H1 (cell line): ENCODE measurements at regions of chr15 and their contacts with region 1.

Region 1: GRCh38 chr15:36877796-36878683 is 222.3 kb downstream of the MEIS2 start:
- DNase-seq: no peak
- H3K4me3 ChIP-seq: peak overlapping the region; percentile 34 to 62 (median 58); a peak in 7 of 8 replicates
- H3K27ac ChIP-seq: no peak overlapping the region
- H3K4me1 ChIP-seq: peaks cover 8 to 37% (median 23%) of the 10 kb centered on the region in 4 experiments
- H3K27me3 ChIP-seq: peaks cover 39 to 62% (median 55%) of the 10 kb centered on the region in 4 experiments
- CTCF ChIP-seq: no peak
- EP300 ChIP-seq: no peak
- POLR2A ChIP-seq: no peak
- RAD21 ChIP-seq: peak in 1 of 2 experiments; percentile 1; a peak in 1 of 4 replicates

Region 2: GRCh38 chr15:36501063-36501678 is 376.9 kb before region 1 on chr15:
- CTCF ChIA-PET with region 1: interaction called, 11 read pairs
- POLR2A ChIA-PET with region 1: no interaction called
- DNase-seq: no peak
- H3K4me3 ChIP-seq: no peak overlapping the region
- H3K27ac ChIP-seq: no peak overlapping the region
- H3K4me1 ChIP-seq: peaks cover 0 to 2% (median 0%) of the 10 kb centered on the region in 4 experiments; a peak in 1 of 7 replicates
- H3K27me3 ChIP-seq: no peaks in the 10 kb centered on the region
- CTCF ChIP-seq: peak in 2 of 3 experiments; percentile 78 to 83; a peak in 3 of 4 replicates
- EP300 ChIP-seq: 0 out of 3 replicates have a peak, but pooled peaks of 1 of the 2 experiments have one; percentile 27
- POLR2A ChIP-seq: no peak
- RAD21 ChIP-seq: peak; percentile 98 to 99

Region 3: DNA sequence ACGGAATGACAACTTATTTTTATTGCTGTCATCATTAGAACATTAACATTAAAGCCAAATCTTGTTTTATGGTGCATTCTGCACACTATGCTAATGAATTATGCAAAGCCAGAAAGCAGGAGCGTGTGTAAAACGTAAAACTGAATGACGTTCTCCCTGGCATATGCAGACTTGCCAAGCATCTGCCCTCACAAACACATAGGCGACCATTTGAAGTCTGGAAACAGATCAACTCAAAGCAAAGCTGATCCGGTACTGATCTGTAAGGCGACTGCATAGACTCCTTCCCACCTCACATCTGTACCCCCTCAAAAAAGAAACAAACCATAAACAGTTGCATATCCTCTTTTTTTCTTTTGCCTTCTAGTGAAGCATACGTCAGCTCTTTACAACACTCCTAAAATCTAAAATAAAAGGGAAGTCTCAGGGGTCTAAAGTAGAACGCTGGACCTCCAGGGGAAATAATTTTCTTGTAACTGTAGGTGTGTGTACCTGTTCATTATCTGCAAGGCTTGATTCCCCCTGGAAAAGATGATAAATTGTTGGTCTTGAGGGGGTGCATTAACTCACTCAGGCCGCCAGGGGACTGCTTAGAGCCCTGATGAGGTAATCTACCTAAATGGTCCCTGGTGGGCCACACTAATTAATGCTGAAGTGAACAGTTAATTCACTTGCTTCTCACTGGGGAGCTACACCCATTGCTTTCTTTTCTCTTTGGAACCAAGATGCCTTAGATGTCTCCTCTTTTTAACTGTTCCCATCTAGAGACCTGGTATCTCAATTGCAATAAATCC is 67.2 kb before region 1 on chr15:
- CTCF ChIA-PET with region 1: interaction called, 10 read pairs
- POLR2A ChIA-PET with region 1: no interaction called
- DNase-seq: no peak
- H3K4me3 ChIP-seq: no peak overlapping the region
- H3K27ac ChIP-seq: no peak overlapping the region
- H3K4me1 ChIP-seq: no peaks in the 10 kb centered on the region
- H3K27me3 ChIP-seq: no peaks in the 10 kb centered on the region
- CTCF ChIP-seq: peak; percentile 56 to 78 (median 65)
- EP300 ChIP-seq: no peak
- POLR2A ChIP-seq: no peak
- RAD21 ChIP-seq: peak; percentile 52 to 69

Region 4: GRCh38 chr15:36924034-36924433 is 46.0 kb after region 1 on chr15:
- CTCF ChIA-PET with region 1: no interaction called
- POLR2A ChIA-PET with region 1: no interaction called
- DNase-seq: no peak
- H3K4me3 ChIP-seq: no peak overlapping the region
- H3K27ac ChIP-seq: no peak overlapping the region
- H3K4me1 ChIP-seq: peaks cover 0 to 3% (median 0%) of the 10 kb centered on the region in 4 experiments; a peak in 2 of 7 replicates
- H3K27me3 ChIP-seq: no peaks in the 10 kb centered on the region
- CTCF ChIP-seq: no peak
- EP300 ChIP-seq: no peak
- POLR2A ChIP-seq: no peak
- RAD21 ChIP-seq: no peak

Region 5: DNA sequence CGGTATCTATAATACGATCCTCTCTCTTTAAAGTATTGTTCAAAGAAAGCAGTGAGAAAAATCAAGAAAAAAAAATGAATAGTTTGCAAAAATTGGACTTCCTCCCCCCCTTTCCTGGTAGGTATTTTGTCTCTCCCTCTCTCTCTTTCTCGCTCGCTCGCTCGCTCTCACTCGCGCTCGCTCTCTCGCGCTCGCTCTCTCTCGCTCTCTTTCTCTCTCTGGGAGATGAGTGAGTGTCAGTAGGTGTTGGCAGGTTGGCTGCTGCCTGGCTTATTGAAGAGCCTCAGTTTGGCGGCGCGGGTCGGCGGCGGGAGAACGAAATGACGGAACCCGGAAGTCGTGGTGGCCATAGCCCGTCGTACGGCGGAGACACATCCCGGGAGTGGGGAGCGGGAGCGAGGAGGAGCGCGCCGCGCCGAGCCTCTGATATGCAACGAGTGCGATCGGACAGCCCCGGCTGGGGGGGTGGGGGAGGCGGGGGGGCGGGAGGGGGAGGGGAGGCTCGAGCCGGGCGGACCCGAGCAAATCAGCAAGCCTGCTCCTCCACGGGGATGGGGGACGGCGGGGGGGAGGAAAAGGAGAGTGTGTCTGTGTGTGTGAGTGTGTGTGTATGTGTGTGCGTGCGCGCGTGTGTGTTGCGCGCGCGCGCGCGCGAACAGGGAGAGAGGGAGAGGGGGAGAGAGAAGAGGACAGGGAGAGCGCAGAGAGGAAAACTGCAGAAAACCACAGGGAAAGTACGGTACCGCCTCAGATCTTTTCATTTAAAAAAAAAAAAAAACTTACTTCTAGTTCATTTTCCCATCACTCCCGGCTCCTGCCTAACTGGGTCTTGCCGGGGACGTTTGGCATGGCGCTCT is 222.3 kb after region 1 on chr15 and contains the start of gene MEIS2:
- CTCF ChIA-PET with region 1: interaction called, 130 read pairs
- POLR2A ChIA-PET with region 1: interaction called, 12 read pairs
- DNase-seq: peak in 1 of 2 experiments; percentile 82
- H3K4me3 ChIP-seq: peak within 1 kb of the TSS; percentile 33 to 81 (median 73)
- H3K27ac ChIP-seq: no peak within 1 kb of the TSS
- H3K4me1 ChIP-seq: peaks cover 4 to 31% (median 17%) of the 10 kb centered on the region in 4 experiments
- H3K27me3 ChIP-seq: peaks cover 36 to 79% (median 69%) of the 10 kb centered on the region in 4 experiments
- CTCF ChIP-seq: no peak
- EP300 ChIP-seq: no peak
- POLR2A ChIP-seq: no peak
- RAD21 ChIP-seq: peak in 1 of 2 experiments; percentile 14; a peak in 1 of 4 replicates
- total RNA-seq, gene MEIS2: 0.22 and 0.65 TPM in 2 replicates